Panc1 (cell line): ENCODE measurements at regions of chr12 and their contacts with region 1.

Region 1: GRCh38 chr12:39619660-39620433 is at the start of gene ABCD2:
- DNase-seq: peak; percentile 25
- ATAC-seq: peak; percentile 96
- H3K4me3 ChIP-seq: peak within 1 kb of the TSS; percentile 58 to 82
- H3K27ac ChIP-seq: no peak within 1 kb of the TSS
- H3K4me1 ChIP-seq: peaks cover 7% of the 10 kb centered on the region; the same call in 1 of the 2 replicates
- H3K27me3 ChIP-seq: peaks cover 3% of the 10 kb centered on the region; the same call in 1 of the 2 replicates
- CTCF ChIP-seq: peak; percentile 23; the same call in 1 of the 2 replicates
- total RNA-seq, gene ABCD2: not detected

Region 2: GRCh38 chr12:39329018-39329417 is 290.8 kb before region 1 on chr12:
- CTCF ChIA-PET with region 1: no interaction called
- POLR2A ChIA-PET with region 1: no interaction called
- in situ Hi-C with region 1: no loop called
- intact Hi-C with region 1: loop called (anchors 10 kb)
- DNase-seq: no peak
- ATAC-seq: no peak
- H3K4me3 ChIP-seq: no peak overlapping the region
- H3K27ac ChIP-seq: no peak overlapping the region
- H3K4me1 ChIP-seq: no peaks in the 10 kb centered on the region
- H3K27me3 ChIP-seq: no peaks in the 10 kb centered on the region
- CTCF ChIP-seq: no peak